ENCODE measurements at regions of chr3 and their contacts with region 1.

Region 1: DNA sequence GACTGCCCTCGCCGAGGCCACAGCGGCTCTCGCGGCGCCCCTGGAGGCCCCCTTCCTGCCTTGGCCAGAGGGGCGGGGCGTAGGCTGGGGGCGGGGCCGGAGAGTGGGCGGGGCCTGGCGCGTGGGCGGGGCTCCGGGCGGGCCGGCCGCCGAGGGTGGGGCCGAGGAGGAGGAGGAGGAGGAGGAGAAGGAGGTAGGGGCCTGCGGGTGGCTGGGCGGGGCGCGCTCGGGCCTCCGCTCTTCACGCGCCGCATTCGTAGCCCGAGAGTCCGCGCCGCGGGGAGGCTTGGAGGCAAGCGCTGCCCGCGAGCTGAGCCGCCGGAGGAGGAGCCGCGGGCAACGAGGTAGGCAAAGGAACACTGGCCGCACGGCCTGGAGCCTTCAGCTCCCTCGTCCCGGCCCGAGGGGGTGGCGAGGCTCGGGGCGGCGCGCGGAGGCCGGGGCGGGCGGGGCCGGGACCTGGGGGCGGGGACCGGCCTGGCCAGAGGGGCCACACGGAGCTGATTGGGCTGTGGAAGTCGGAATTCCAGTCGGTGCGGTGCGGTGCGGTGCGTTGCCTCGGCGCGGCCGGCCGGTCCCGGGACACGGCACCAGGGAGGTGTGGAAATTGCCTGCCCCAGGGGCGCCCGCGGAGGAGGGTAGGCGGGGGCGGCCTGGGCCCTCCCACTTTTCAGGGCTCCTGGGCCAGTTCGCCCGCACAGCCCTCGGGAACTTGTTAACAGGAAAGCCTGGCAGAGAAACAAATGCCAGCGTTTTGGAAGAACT is at the start of gene PPP2R3A:
- DNase-seq: peak; percentile 80
- ATAC-seq: peak; percentile 93
- H3K4me3 ChIP-seq: peak within 1 kb of the TSS; percentile 88
- H3K27ac ChIP-seq: peak within 1 kb of the TSS; percentile 88
- H3K4me1 ChIP-seq: peaks cover 6% of the 10 kb centered on the region
- H3K27me3 ChIP-seq: no peaks in the 10 kb centered on the region
- CTCF ChIP-seq: 0 out of 2 replicates have a peak, but pooled peaks have one; percentile 0
- POLR2A ChIP-seq: peak; percentile 78
- RAD21 ChIP-seq: no peak
- total RNA-seq, gene PPP2R3A: 37.3 and 46.7 TPM in 2 replicates

Region 2: GRCh38 chr3:135918580-135918962 is 47.1 kb before region 1 on chr3:
- CTCF ChIA-PET with region 1: no interaction called
- POLR2A ChIA-PET with region 1: no interaction called
- dilution Hi-C with region 1: no loop called
- in situ Hi-C with region 1: no loop called
- intact Hi-C with region 1: loop called (anchors 5 kb)
- DNase-seq: peak; percentile 67
- ATAC-seq: peak; percentile 90
- H3K4me3 ChIP-seq: no peak overlapping the region
- H3K27ac ChIP-seq: no peak overlapping the region
- H3K4me1 ChIP-seq: no peaks in the 10 kb centered on the region
- H3K27me3 ChIP-seq: no peaks in the 10 kb centered on the region
- CTCF ChIP-seq: peak; percentile 69
- POLR2A ChIP-seq: no peak
- RAD21 ChIP-seq: peak; percentile 67

Region 3: DNA sequence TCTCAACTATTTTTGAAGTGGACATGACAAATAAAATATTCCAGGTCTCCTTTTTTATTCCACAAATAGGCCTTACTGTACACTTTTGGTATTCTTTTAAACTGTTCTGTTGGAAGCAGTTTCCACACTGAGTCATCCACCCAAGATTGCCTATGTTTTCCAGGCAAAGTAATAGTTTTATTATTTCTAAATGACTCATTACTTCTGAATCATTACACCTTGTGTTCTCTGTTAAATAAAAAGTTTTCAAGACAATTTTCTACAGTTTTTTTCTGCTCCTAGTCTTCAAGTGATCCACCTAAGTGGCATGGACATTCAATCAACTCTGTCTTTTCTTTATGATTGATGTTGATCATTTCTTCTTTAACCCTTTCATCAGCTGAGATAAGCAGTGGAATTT is 26.4 kb after region 1 on chr3:
- CTCF ChIA-PET with region 1: no interaction called
- POLR2A ChIA-PET with region 1: no interaction called
- dilution Hi-C with region 1: no loop called
- in situ Hi-C with region 1: no loop called
- intact Hi-C with region 1: loop called (anchors 1 kb)
- DNase-seq: peak; percentile 92
- ATAC-seq: peak; percentile 82
- H3K4me3 ChIP-seq: no peak overlapping the region
- H3K27ac ChIP-seq: no peak overlapping the region
- H3K4me1 ChIP-seq: peaks cover 10% of the 10 kb centered on the region
- H3K27me3 ChIP-seq: no peaks in the 10 kb centered on the region
- CTCF ChIP-seq: no peak
- POLR2A ChIP-seq: no peak
- RAD21 ChIP-seq: no peak

Region 4: DNA sequence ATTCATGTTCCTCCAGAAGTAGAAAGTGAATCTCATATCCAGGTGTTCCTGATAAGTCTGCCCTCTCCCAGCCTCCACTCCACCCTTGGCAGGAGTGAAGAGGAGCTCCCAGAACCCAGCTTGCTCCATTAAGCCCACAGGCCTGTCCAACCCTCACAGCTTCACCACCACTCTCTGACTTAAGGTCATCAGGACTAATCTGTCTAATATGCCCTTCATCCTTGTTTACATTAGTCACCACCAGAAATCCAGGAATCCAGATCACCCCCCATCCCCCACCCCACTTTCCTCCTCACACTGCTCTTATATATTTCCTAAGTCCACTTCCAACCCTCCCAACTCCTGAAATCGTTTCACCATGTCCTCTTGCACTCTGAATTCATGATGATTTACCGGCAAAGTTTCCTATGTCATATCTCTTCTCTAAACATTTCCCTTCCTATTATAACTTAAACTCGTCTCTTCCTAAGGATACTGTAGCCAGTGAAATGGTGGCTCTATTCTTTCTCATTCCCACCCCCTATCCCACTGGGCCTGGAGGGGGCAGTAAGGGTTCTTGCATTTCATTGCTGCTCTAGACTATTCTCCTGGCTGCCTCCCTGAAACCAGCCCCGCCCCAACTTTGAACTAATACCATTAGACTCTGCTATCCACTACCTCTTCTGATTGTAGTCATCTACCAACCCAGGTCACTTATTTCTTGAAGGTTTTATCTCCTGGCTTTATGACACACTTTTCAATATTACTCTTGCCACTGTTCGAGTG is 43.2 kb after region 1 on chr3:
- CTCF ChIA-PET with region 1: no interaction called
- POLR2A ChIA-PET with region 1: no interaction called
- dilution Hi-C with region 1: no loop called
- in situ Hi-C with region 1: no loop called
- intact Hi-C with region 1: no loop called
- DNase-seq: peak; percentile 52
- ATAC-seq: peak; percentile 62
- H3K4me3 ChIP-seq: no peak overlapping the region
- H3K27ac ChIP-seq: no peak overlapping the region
- H3K4me1 ChIP-seq: peaks cover 3% of the 10 kb centered on the region
- H3K27me3 ChIP-seq: no peaks in the 10 kb centered on the region
- CTCF ChIP-seq: no peak
- POLR2A ChIP-seq: no peak
- RAD21 ChIP-seq: no peak

Measured in IMR-90 (cell line).